A673 (cell line): ENCODE measurements at regions of chr6 and their contacts with region 1.

Region 1: DNA sequence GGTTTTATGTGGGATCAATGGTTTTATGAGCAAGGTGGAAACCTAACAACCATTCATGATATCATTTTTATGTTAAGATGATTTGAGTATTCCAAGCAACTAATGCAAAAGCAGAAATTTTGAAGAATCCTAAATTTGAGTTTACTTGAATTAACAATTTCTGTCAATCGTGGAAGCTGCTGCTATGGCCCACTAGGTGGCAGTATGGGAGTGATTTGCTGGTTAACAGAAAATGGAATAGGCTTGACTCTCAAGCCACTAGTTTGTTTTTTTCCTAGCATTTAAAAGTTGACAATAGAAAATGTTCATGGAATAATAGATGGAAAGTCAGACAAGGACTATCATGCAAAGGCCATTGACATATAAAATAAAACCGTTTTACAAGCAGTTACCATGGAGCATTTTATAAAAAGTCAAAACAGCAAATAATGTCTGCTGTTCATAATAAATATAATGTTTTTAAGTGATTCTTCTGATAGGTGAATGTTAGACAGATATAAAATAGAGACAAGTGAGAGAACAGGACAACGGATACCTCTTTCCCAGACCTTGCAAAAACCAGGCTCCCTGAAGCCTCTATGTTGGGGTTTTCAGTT is 43.0 kb upstream of the TMEM200A start:
- DNase-seq: peak; percentile 70
- H3K4me3 ChIP-seq: no peak overlapping the region
- H3K27ac ChIP-seq: no peak overlapping the region
- H3K4me1 ChIP-seq: no peaks in the 10 kb centered on the region
- H3K27me3 ChIP-seq: no peaks in the 10 kb centered on the region
- CTCF ChIP-seq: peak; percentile 91

Region 2: DNA sequence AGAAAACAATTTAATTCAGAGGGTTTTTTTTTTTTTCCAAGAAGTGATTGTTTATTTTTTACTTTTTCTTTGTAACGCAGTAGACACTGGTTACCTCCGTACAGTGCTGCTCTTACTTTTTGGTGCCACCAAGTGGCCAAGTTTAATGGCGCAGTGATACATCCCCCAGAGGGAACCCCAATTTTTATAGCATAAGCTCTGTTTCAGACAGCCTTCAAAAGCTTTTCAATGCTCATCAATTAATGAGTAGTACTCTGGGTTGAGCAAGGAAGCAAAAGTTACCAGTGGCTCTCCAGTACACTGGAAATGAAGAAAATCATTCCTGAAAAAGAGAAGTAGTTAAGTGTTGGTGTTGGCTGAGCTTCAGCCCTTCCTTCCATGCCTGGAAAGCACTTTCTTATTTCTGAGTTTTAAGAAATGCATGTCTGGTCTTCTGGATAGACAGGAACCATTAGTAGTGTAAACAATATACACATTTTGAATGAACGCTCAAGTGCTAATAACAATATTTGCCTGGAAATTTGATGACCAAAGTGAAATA is 375.3 kb after region 1 on chr6:
- CTCF ChIA-PET with region 1: interaction called, 17 read pairs
- POLR2A ChIA-PET with region 1: no interaction called
- intact Hi-C with region 1: loop called (anchors 1 kb)
- DNase-seq: peak; percentile 76
- H3K4me3 ChIP-seq: no peak overlapping the region
- H3K27ac ChIP-seq: no peak overlapping the region
- H3K4me1 ChIP-seq: no peaks in the 10 kb centered on the region
- H3K27me3 ChIP-seq: no peaks in the 10 kb centered on the region
- CTCF ChIP-seq: peak; percentile 95

Region 3: DNA sequence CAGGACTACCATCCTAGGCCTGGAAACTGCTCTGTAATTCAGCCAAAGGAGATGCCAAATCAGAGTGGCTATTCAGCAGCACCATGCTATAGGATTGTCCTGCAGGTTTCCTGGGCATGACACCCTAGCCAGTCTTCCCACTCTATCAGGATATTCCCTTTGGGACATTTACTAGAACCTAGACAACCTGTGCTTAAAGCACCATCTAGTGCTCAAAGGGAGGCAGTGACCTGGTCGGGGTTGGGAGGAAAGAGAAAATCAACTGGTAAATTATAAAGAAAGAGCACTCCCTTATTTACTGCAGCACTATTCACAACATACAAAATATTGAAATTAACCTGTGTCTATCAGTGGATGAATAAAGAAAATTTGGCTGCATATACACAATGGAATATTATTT is 437.2 kb after region 1 on chr6:
- CTCF ChIA-PET with region 1: no interaction called
- POLR2A ChIA-PET with region 1: no interaction called
- intact Hi-C with region 1: loop called (anchors 2 kb)
- DNase-seq: peak; percentile 72
- H3K4me3 ChIP-seq: no peak overlapping the region
- H3K27ac ChIP-seq: no peak overlapping the region
- H3K4me1 ChIP-seq: no peaks in the 10 kb centered on the region
- H3K27me3 ChIP-seq: no peaks in the 10 kb centered on the region
- CTCF ChIP-seq: peak; percentile 79

Region 4: DNA sequence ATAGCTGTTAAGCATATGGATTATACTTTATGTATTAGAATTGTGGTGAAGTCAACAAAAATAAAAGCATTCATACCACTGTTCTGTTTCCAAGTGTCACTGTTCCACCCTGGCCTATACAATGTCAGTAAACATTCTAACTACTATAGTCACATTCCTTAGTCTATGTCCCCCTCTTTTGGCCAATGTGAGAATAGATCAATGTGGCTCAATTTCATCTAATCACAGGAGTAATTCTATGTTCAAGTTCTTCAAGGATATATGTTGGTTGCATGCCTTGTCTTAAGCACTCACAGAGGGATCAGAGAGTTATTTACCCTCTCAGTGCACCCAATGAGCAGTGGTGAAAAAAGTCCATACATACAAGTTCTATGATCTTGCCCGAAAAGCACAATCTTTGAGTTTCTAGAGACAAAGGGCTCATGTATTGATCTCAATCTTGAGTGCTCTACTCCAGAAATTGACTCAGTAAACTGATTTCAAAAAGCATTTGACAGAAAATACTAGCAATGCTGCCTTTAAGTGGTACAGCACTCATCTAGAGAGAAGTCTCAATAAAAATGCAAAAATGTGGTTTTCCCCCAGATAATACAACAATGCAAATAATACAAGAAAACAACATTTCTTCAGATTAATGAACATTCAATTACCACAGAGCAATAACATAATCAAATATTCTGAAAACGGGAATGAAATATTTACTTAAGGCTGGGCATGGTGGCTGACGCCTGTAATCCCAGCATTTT is 521.0 kb after region 1 on chr6:
- CTCF ChIA-PET with region 1: no interaction called
- POLR2A ChIA-PET with region 1: no interaction called
- intact Hi-C with region 1: loop called (anchors 5 kb)
- DNase-seq: peak; percentile 75
- H3K4me3 ChIP-seq: no peak overlapping the region
- H3K27ac ChIP-seq: no peak overlapping the region
- H3K4me1 ChIP-seq: no peaks in the 10 kb centered on the region
- H3K27me3 ChIP-seq: no peaks in the 10 kb centered on the region
- CTCF ChIP-seq: peak; percentile 68

Region 5: DNA sequence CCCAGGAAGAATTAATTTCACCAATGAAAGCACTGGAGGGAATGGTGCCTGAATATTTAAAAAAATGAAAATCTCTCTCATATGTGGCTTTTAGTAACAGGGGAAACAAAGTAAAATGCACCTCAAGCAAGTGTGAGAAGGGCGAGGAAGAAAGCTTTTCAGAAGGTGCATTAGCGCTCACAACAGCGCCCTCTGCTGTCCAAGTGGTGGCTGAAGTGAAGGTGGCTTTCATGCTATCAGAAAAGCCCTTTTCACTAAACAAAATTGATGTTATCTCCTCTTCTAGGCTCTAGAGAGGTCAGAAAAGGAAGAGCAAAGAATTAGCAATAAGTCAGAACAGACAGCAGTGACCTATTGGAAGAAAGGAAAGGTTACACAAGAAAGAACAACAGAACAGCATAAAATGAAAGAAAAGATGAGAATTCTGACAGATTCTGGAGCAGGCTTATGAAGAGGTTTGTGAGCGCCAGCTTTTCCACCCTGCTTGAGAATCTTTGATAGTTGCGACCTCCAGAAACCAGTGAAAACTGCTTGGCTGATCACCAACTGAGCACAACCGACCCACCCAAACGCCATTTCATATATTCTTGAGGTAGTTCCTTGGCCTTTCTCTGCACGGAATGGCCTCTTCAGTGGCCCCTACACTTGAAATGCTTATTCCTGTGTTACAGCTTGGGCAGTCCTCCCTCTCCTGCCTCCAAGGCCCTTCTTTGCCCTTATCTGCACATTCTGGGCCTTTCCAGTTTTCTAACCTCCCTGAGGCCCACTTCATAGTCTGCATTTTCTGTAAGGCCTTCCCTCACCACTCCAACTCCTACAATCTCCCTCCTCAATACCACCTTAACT is 549.7 kb after region 1 on chr6:
- CTCF ChIA-PET with region 1: no interaction called
- POLR2A ChIA-PET with region 1: no interaction called
- intact Hi-C with region 1: loop called (anchors 10 kb)
- DNase-seq: peak; percentile 68
- H3K4me3 ChIP-seq: no peak overlapping the region
- H3K27ac ChIP-seq: no peak overlapping the region
- H3K4me1 ChIP-seq: peaks cover 3% of the 10 kb centered on the region
- H3K27me3 ChIP-seq: no peaks in the 10 kb centered on the region
- CTCF ChIP-seq: peak; percentile 98